PC-3 (cell line): ENCODE measurements at regions of chr7 and their contacts with region 1.

Region 1: GRCh38 chr7:47792521-47793121 is 155.6 kb downstream of the PKD1L1 start:
- DNase-seq: peak; percentile 60
- ATAC-seq: peak; percentile 92
- H3K4me3 ChIP-seq: no peak overlapping the region
- H3K27ac ChIP-seq: no peak overlapping the region
- H3K4me1 ChIP-seq: peaks cover 13% of the 10 kb centered on the region
- H3K27me3 ChIP-seq: no peaks in the 10 kb centered on the region
- CTCF ChIP-seq: peak; percentile 84

Region 2: DNA sequence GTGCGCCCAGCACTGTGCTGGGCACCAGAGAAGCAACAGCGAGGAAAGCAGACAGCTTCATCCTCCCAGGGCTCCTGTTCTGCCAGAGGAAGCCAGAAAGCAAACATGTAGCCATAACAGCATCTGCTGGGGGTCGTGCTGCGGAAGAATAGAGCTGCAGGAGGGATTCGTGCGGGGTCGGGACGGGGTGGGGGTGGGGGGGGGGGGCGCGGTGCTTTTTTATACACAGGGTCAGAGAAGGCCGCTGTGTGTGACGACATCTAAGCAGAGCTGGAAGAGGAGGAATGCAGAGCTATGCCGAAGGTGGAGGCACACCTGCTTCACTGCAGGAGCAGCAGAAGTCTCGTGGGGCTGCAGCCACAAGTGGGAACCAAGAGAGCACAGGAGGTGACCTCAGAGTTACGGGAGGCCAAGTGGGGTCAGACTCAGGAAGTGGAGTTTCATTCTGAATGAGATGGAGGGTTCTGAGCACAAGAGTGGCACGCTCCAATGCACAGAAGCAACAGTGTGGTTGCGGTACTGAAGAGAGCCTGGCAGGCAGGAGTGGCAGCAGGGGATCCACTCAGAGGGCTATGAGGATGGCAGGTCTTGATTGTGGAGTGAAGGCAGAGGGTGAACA is 144.6 kb after region 1 on chr7:
- CTCF ChIA-PET with region 1: interaction called, 5 read pairs
- POLR2A ChIA-PET with region 1: no interaction called
- intact Hi-C with region 1: loop called (anchors 1 kb)
- DNase-seq: no peak
- ATAC-seq: no peak
- H3K4me3 ChIP-seq: no peak overlapping the region
- H3K27ac ChIP-seq: no peak overlapping the region
- H3K4me1 ChIP-seq: peaks cover 14% of the 10 kb centered on the region
- H3K27me3 ChIP-seq: no peaks in the 10 kb centered on the region
- CTCF ChIP-seq: no peak

Region 3: DNA sequence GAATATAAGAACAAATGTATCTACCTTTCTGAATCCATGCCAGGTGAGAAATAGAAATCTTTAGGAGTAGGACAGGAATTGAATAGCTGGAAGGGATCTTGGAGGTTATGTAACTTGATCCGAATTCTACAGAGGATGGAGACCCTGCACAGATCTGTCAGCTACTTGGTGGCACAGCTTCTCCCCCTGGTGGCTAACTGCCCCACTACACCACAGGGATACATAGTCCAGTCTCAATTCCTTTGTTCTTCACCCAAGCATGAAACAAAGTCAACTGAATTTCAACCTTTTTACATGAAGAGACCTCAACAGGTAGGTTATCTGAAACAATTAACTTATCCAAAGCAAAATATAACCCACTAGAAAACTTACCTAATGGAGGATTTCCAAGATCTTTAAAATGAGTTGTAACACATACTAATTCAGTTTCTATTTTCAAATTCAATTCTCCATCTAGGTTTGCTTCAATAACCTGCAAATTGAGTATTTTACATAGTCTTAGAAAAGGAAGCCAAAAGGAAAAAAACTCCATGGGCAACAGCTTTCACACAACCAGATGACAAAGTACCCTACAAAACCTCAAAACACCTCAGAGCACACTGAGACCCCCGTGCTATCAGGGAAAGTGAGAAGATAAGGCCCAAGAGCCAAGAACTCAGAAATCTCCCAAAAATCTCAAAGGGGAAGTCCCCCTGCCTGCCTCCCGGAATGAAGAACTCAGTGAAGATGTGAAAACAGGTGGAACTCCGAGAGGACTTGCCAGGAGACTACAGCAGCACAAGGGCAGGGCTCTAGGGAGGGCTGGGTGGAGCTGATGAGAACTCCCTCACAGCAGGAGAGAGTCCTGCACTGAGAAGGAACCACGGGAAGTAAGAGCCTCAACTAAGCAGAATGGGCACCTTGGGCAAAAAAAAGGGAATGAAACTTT is 176.5 kb after region 1 on chr7:
- CTCF ChIA-PET with region 1: no interaction called
- POLR2A ChIA-PET with region 1: no interaction called
- intact Hi-C with region 1: loop called (anchors 1 kb)
- DNase-seq: peak; percentile 69
- ATAC-seq: peak; percentile 95
- H3K4me3 ChIP-seq: no peak overlapping the region
- H3K27ac ChIP-seq: no peak overlapping the region
- H3K4me1 ChIP-seq: peaks cover 5% of the 10 kb centered on the region; the same call in 1 of the 2 replicates
- H3K27me3 ChIP-seq: no peaks in the 10 kb centered on the region
- CTCF ChIP-seq: peak; percentile 91